ENCODE measurements at regions of chr5 and their contacts with region 1.

Region 1: DNA sequence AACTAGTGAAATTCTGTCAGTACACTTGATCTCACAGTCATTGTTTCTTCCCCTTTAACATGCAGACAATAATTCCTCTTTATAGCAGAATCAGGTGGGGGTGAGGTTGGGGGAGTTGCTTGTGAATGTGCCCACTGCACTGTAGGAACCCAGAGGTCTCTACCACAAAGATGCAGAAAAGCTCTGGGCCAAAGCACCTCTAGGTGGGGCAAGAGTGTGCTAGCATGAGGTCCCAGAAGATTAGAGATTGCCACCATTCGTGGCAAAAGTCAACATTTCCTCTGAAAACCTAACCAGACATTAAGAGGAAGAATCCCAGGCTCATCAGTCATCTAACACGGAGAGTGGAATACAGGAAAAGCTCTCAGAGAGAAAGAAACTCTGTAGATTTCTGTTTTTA is 74.5 kb downstream of the PTCD2 start:
- DNase-seq: peak; percentile 49
- CTCF ChIP-seq: peak; percentile 75

Region 2: DNA sequence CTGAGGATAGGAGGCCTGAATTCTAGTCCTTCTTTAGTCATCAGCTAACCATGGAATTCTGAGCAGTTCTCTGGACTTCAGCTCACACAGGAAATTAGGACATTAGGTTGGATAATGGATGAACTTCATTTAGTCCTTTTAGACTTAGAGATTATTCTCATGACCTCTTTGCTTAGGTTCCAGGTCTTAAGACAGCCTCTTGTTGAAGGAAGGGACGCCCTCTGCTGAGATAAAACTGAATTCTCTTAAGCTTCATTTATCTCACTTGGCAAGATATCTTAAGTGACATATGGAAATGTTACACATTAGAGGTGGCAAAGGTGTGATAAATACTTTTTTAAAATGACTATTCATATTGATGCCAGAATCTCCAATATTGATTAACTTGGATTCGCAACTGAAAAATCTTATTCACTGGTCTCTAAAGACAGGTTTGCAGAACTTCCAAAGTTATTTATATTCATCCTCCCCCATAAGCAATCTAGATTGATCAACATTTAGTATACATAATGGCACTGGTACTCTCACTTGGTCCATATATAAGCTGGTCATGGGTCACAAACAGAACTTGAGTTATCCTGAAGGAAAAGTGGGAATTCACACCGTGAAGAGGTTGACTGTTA is 129.4 kb after region 1 on chr5:
- in situ Hi-C with region 1: loop called (anchors 10 kb)
- DNase-seq: peak; percentile 61
- CTCF ChIP-seq: peak; percentile 62

Region 3: GRCh38 chr5:72812488-72812887 is 417.8 kb after region 1 on chr5:
- in situ Hi-C with region 1: no loop called
- DNase-seq: no peak
- CTCF ChIP-seq: no peak